AG04450 (cell line): ENCODE measurements at regions of chr19 and their contacts with region 1.

Region 1: DNA sequence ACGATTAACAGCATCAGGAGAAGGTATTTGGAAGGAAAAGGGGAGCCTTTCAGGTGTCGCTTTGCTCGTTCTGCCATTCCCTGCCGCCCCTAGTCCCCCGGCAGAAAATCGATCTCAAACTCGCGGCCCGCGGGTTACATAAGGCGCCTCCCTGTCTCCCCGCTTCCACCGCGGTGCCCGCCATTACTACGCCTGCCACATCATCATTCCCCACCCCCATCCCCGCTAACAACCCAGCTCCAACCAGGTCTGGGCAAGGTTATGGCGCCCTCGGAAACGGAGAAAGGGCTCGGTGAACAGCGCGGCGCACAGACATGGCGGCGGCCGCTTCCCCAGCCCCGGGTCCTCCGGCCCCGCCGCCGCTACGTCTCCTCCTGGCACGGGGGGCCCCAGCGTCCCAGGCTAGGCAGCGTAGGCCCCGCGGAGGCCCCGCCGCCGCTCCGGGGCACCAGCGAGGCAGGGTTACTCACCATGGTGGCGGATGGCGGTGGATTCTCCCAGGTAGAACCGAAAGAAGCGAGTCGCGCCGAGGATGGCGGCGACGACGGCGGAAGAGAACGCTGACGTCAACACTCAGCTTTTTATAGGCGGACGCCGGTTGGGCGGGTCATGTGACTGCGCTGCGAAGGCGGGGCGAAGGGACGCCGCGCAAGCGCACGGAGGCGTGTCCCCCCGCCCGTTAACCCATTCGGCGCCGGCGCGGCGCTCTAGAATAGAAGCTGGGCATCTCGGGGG is at the start of gene EEF2:
- DNase-seq: peak; percentile 86
- H3K4me3 ChIP-seq: peak within 1 kb of the TSS; percentile 97
- H3K27ac ChIP-seq: peak within 1 kb of the TSS; percentile 82
- H3K27me3 ChIP-seq: no peaks in the 10 kb centered on the region
- CTCF ChIP-seq: no peak
- polyA plus RNA-seq, gene EEF2: 1,648 and 1,697 TPM in 2 replicates

Region 2: DNA sequence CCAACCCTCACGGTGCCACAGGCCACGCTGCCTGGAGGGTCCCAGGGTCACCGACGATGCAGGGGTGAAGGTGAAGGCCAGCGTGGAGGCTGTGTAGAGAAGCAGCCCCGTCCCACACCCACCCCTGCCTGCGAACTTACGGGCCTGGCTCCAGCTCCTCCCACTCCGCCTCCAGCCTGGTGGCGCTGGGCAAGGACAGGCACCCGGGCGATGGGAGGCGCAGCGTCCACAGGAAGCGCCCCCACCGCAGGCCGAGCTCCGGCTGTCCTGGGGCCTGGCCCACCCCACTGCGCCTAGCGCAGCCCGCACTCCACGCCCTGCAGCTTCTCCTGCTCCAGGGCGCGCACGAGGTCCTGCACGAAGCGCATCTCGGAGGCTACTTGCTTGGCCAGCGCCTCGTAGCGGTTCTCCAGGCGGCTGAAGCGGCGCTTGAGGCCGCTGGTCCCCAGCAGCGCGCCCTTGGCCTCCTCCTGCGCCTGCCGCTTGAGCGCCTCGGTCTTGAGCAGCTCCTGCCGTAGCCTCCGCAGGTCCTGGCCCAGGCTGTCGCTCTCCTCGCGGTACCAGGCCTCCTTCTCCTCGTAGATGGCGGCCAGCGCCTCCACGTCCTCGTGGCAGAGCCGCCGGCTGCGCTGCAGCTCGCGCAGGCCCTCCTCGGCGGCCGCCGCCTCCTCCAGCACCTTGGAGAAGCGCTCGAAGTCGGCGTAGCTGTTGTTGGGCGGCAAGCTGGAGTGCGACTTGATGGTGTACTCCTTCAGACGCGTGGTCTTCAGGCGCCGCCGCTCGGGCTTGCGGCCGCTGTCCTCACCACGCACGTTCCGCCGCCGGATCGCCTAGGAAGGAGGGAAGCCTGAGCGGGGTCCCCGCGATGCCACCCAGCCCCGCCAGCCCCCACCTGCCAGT is 26.0 kb before region 1 on chr19:
- CTCF ChIA-PET with region 1: interaction called, 12 read pairs
- POLR2A ChIA-PET with region 1: interaction called, 4 read pairs
- DNase-seq: no peak
- H3K4me3 ChIP-seq: no peak overlapping the region
- H3K27ac ChIP-seq: no peak overlapping the region
- H3K27me3 ChIP-seq: no peaks in the 10 kb centered on the region
- CTCF ChIP-seq: no peak

Region 3: GRCh38 chr19:4007021-4007835 is 22.2 kb after region 1 on chr19 and contains the start of gene PIAS4:
- CTCF ChIA-PET with region 1: interaction called, 39 read pairs
- POLR2A ChIA-PET with region 1: interaction called, 11 read pairs
- DNase-seq: peak; percentile 69
- H3K4me3 ChIP-seq: peak within 1 kb of the TSS; percentile 94
- H3K27ac ChIP-seq: no peak within 1 kb of the TSS
- H3K27me3 ChIP-seq: no peaks in the 10 kb centered on the region
- CTCF ChIP-seq: no peak
- polyA plus RNA-seq, gene PIAS4: 9.0 and 12.0 TPM in 2 replicates

Region 4: DNA sequence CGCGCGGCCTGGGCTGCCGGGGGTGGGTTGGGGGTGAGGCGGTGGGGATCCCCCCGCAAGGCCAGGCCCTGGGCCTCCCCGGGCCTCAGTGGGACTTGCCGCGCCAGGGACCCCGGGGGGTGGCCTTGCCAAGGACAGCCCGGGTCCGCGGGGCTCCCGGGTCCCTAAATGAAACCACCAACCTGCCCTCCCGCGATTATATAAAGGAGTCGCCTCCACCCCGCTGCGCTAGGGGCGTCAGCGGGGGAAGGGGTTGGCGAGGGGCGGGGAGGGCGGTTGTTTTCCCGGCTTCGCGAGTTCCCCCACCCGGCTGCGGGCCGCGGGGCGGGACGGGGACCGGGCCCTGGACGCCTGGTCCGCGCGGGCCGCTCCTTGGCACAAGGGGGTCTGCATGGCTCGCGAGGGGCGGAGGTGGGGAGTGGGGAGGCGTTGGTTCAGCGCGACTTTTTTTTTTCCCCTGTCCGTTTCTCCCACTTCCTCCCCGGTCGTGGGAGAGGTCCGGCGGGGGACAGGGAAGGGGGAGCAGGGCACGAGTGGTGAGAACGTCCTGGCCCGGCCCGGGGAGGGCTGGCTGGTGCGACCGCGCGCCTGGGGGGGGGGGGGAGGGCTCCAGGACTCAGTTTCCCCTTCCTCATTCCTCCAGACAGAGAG is 82.4 kb after region 1 on chr19:
- CTCF ChIA-PET with region 1: interaction called, 11 read pairs
- POLR2A ChIA-PET with region 1: interaction called, 5 read pairs
- DNase-seq: no peak
- H3K4me3 ChIP-seq: peak overlapping the region; percentile 69
- H3K27ac ChIP-seq: no peak overlapping the region
- H3K27me3 ChIP-seq: no peaks in the 10 kb centered on the region
- CTCF ChIP-seq: no peak

Region 5: DNA sequence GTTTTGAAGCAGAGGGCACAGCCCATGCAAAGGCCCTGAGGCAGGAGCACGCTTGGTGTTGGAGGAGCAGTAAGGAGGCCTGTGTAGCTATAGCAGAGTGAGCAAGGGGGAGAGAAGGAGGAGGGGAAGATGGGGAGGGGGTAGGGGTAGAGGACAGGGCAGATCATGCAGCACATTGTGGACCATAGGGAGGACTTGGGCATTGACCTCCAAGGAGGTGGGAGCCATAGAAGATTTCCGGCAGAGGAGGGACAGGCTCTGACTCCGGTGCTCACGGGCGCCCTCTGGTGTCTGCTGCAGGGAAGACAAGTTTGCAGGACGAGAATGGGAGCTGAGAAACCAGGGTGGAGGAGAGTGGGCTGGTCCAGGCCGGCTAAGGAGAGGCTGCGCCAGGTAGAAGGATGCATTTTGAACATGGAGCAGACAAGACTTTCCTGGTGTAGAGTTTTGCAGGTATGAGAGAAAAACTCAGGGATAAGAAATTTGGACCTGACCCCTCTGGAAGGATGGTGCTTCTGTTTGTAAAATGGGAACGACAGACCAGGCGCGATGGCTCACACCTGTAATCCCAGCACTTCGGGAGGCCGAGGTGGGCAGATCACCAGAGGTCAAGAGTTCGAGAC is 154.7 kb after region 1 on chr19:
- CTCF ChIA-PET with region 1: interaction called, 10 read pairs
- POLR2A ChIA-PET with region 1: interaction called, 15 read pairs
- DNase-seq: no peak
- H3K4me3 ChIP-seq: no peak overlapping the region
- H3K27ac ChIP-seq: no peak overlapping the region
- H3K27me3 ChIP-seq: no peaks in the 10 kb centered on the region
- CTCF ChIP-seq: peak; percentile 72

Region 6: DNA sequence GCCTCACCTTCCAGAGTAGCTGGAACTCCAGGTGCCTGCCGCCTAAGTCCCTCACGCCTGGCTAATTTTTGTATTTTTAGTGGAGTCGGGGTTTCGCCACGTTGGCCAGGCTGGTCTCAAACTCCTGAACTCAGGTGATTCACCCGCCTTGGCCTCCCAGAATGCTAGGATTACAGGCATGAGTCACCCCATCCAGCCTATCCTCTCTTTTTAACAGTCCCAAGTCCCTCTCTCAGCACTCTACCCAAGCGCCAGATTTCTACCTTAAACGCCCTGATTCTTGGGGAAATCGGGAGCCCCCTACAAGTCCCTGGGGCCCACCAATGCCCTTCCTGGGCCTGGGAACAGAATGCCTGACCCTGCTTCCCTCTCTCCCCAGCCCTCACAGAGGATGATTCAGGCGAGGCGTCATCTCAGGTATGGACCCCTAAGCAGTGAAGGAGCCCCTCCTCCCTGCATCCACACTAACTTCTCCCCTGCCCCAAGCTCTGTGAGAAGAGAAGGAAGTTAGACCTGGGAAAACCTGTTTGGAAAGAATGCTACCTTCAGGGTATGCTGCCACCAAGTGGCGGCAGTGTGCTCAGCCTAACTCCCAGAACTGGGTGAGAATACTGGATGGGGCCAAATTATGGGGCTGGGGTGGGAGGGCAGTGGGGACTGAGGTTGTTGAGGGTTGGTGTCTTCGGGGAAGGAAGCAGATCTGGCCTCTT is 223.5 kb after region 1 on chr19:
- CTCF ChIA-PET with region 1: interaction called, 17 read pairs
- POLR2A ChIA-PET with region 1: interaction called, 18 read pairs
- DNase-seq: no peak
- H3K4me3 ChIP-seq: no peak overlapping the region
- H3K27ac ChIP-seq: no peak overlapping the region
- H3K27me3 ChIP-seq: peaks cover 3% of the 10 kb centered on the region
- CTCF ChIP-seq: peak; percentile 68